Posterior vena cava (tissue), 2 donors: ENCODE measurements at regions of chrX and their contacts with region 1.

Region 1: DNA sequence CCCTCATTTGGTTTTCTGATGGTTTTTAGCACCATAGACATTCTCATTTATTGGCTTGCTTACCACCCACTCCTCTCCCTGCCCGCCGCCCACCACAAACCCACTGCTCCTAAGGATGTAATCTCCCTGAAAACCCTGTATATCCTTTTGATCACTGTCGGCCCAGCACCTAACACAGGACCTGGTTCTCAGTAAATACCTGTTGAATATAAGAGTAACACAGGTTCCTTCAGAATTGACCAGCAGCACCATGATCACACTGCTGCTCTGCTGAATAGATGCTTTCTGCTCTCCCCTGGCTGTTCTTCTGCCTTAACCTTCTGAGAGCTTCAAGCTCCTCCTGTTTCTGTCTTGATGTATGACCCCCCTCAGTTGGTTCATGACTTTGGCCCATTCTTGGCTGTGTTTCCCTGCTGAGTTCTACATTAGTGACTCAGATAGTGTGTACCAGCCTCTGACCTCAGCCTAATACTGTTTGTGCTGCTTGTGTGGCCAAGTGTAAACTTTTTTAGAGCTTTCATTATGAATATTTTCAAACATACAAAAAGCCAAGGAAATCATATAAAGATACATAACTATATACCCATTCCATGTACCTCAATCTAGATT is 265.3 kb downstream of the FRMPD4 start:
- DNase-seq: no peak

Region 2: DNA sequence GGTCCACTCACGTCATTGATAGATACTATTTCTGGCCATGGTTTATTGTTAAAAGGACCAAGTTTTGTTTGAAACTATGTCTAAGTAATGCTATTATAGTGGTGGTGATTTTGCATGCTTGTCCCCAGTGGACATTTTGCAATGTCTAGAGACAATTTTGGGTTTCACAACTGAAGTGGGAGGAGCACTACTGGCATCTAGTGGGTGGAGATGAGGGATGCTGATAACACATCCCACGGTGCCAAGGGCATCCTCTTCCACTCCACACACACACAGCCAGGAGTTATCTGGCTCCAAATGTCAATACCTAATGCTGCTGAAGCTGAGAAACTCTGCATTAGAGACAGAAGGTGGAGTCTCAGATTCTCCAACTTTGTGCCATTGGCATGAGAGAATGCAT is 134.1 kb before region 1 on chrX:
- intact Hi-C with region 1: no loop called
- DNase-seq: no peak

Region 3: GRCh38 chrX:12378253-12378652 is 25.3 kb before region 1 on chrX:
- intact Hi-C with region 1: loop called in 1 of 2 experiments (anchors 1 kb)
- DNase-seq: no peak

Region 4: DNA sequence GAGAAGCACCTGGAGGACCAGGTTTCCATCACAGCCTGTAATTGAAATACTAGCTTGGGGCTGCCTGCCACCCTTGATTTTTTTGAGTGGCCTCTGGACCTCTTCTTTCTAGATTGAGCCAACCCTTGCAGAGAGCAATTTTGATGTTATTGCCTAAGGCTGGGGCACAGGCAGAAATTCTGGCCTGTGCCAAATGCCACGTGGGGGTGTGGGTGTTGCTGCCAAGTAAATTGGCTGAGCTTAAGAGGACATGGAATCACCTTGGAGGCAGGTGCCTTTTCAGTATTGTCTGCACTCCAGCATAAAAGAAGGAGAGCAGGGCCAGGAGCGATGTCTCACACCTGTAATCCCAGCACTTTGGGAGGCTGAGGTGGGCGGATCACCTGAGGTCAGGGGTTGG is 101.5 kb after region 1 on chrX:
- intact Hi-C with region 1: no loop called
- DNase-seq: no peak